ENCODE measurements at regions of chr2 and their contacts with region 1.

Region 1: DNA sequence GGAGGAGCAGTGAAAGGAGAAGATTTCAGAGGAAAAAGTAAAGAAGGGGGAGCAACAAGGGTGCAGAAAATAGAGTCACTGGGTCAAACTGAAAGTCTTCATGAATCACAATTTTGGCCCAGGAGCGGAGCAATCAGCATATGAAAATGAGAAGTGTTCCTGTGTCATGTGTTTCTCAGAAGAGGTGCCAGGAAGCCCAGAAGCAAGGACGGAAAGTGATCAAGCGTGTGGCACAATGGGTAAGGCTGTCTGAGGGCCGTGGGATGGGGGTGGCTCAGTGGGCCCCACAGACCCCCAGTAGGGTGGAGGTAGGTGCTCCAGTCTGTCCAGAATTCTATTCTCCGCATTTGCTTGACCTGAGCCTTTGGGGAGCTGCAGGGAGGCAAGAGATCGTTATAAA is 44.2 kb downstream of the SP140 start:
- DNase-seq: no peak
- ATAC-seq: no peak
- H3K4me3 ChIP-seq: no peak overlapping the region
- H3K27ac ChIP-seq: no peak overlapping the region
- H3K4me1 ChIP-seq: no peaks in the 10 kb centered on the region
- H3K27me3 ChIP-seq: no peaks in the 10 kb centered on the region
- CTCF ChIP-seq: no peak

Region 2: GRCh38 chr2:231765496-231765929 is 1495.8 kb after region 1 on chr2:
- CTCF ChIA-PET with region 1: no interaction called
- POLR2A ChIA-PET with region 1: interaction called, 12 read pairs
- intact Hi-C with region 1: no loop called
- DNase-seq: no peak
- ATAC-seq: no peak
- H3K4me3 ChIP-seq: no peak overlapping the region
- H3K27ac ChIP-seq: no peak overlapping the region
- H3K4me1 ChIP-seq: no peaks in the 10 kb centered on the region
- H3K27me3 ChIP-seq: no peaks in the 10 kb centered on the region
- CTCF ChIP-seq: no peak

Measured in PC-3 (cell line).